Posterior vena cava (tissue), 2 donors: ENCODE measurements at regions of chr1 and their contacts with region 1.

Region 1: DNA sequence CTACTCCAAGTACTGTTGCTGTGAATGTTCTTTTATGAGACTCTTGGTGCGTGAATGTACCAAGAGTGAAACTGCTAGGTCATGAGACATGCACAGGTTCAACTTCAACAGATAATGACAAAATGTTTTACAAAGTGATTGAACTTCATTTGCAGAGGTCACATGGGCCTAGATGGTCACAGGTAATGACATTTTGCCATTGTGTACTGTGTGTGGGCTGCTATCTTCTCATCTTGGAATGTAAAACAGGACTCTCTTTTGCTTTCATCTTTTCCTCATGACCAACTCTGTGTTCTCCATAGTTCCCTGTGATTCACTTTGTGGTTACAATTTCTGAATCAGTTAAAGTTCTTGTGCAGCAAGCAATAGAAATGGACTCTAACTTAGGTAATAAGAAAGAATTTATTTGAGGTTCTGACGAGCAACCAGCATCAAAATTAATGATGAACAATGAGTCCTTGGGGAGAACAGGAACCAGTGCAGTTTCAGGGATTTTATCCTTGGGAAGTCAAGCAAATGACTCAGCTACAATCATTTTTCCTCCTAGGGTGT is 16.2 kb upstream of the TSNAX start:
- DNase-seq: no peak

Region 2: DNA sequence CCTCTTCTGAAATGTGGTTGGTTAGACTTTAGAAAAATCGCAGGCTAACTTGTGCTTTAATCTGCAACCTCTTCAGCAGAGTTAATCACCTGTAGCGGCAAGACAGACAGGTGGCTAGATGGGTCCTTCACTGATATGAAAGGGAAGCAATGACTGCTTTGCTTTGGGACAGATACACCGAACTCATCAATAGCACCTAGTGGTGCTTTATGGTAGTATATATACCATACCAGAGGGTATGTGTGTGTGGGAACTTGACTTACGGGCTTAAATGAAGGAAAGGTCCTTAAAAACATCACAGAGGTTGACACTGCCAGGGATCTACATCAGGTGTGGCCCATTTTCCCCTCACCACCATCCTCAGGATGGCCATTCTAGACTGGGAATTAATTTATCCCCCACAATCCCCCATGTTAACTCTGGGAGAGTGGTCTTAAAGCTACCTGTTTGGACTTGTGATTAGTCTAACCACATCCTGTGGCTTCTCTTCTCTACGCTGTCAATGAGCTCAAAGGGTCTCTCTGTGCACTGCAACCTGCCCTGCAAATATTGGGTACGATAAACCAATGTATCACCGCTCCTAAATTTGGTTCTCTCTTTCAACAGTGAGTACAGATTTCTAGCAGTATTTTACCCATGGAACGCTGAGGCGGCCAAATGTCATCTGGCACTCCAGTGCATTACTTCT is 955.0 kb after region 1 on chr1:
- intact Hi-C with region 1: loop called in 1 of 2 experiments (anchors 5 kb)
- DNase-seq: no peak

Region 3: GRCh38 chr1:232950197-232951176 is 1438.3 kb after region 1 on chr1 and contains the start of gene NTPCR:
- intact Hi-C with region 1: loop called in 1 of 2 experiments (anchors 10 kb)
- DNase-seq: peak; percentile 98
- total RNA-seq, gene NTPCR: 27.5 to 37.3 TPM